OCI-LY7 (cell line): ENCODE measurements at regions of chr3 and their contacts with region 1.

Region 1: GRCh38 chr3:49802719-49803464 is at the start of gene INKA1:
- DNase-seq: peak; percentile 93
- H3K4me3 ChIP-seq: peak within 1 kb of the TSS; percentile 82
- H3K27ac ChIP-seq: peak within 1 kb of the TSS; percentile 96
- H3K4me1 ChIP-seq: peaks cover 46% of the 10 kb centered on the region
- CTCF ChIP-seq: peak; percentile 92
- total RNA-seq, gene INKA1: 12.8 and 18.4 TPM in 2 replicates

Region 2: DNA sequence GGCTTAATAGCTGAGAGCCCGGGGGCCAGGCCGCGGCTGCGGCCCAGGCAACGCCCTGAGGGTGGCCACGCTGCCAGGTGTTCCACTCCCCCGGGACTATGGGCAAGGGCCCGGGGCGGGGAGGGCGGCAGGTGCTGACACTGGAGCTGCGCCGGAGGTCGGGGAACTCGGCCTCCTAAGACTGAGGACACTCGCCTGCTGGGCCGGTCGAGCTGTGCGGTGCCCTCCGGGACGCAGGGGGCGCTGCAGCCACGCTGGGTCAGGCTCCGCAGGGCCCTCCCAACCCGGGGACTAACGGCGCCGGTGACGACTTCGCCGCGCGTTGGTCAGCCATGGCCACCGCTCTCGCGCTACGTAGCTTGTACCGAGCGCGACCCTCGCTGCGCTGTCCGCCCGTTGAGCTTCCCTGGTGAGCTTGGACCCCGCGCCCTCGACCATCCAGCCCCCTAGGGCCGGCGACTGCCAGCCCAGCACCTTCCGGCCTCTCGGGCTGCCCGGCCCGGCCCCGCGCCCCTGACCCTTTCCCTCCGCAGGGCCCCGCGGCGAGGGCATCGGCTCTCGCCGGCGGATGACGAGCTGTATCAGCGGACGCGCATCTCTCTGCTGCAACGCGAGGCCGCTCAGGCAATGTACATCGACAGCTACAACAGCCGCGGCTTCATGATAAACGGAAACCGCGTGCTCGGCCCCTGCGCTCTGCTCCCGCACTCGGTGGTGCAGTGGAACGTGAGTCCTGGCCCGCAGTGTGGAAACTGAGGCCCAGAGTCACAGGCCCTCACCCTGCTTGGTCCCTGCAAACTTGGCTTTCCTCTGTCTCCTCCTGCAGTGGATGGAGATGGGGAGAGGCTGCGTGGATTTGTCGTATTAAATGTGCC is 780.8 kb before region 1 on chr3 and contains the start of gene NDUFAF3:
- CTCF ChIA-PET with region 1: no interaction called
- POLR2A ChIA-PET with region 1: no interaction called
- intact Hi-C with region 1: loop called (anchors 5 kb)
- DNase-seq: peak; percentile 99
- H3K4me3 ChIP-seq: peak within 1 kb of the TSS; percentile 80
- H3K27ac ChIP-seq: peak within 1 kb of the TSS; percentile 93
- H3K4me1 ChIP-seq: peaks cover 65% of the 10 kb centered on the region
- CTCF ChIP-seq: peak; percentile 84
- total RNA-seq, gene NDUFAF3: 255 and 309 TPM in 2 replicates

Region 3: DNA sequence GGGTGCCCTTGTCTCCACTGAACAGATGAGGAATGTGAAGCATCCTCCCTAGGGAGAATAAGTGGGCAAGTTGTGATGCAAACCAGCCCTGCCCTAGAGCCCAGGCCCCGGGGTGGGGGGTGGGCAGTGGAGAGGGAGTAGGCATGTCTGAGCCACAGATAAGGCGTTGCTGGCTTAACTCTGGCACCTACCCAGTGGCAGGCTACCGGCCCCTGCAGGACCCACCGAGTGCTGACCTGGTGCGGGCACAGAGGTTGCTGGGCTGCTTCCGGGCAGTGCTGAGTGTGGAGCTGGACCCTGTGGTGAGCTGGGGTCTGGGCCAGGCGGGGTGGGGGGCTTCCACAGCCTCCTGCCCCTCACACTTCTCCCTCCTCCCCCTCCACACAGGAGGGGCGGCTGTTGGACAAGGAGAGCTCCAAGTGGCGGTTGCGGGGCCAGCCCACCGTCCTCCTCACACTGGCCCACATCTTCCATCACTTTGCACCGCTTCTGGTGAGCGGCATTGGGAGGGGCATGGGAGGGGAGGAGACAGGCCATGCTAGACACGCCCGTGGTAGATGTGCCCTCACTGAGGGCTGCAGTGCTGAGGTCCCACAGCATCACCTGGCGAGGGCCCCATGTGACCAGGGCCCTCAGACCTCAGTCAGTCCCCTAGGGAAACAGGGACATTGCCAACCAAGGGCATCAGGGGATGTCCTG is 103.5 kb before region 1 on chr3:
- CTCF ChIA-PET with region 1: no interaction called
- POLR2A ChIA-PET with region 1: no interaction called
- intact Hi-C with region 1: no loop called
- DNase-seq: no peak
- H3K4me3 ChIP-seq: no peak overlapping the region
- H3K27ac ChIP-seq: no peak overlapping the region
- H3K4me1 ChIP-seq: no peaks in the 10 kb centered on the region
- CTCF ChIP-seq: no peak

Region 4: DNA sequence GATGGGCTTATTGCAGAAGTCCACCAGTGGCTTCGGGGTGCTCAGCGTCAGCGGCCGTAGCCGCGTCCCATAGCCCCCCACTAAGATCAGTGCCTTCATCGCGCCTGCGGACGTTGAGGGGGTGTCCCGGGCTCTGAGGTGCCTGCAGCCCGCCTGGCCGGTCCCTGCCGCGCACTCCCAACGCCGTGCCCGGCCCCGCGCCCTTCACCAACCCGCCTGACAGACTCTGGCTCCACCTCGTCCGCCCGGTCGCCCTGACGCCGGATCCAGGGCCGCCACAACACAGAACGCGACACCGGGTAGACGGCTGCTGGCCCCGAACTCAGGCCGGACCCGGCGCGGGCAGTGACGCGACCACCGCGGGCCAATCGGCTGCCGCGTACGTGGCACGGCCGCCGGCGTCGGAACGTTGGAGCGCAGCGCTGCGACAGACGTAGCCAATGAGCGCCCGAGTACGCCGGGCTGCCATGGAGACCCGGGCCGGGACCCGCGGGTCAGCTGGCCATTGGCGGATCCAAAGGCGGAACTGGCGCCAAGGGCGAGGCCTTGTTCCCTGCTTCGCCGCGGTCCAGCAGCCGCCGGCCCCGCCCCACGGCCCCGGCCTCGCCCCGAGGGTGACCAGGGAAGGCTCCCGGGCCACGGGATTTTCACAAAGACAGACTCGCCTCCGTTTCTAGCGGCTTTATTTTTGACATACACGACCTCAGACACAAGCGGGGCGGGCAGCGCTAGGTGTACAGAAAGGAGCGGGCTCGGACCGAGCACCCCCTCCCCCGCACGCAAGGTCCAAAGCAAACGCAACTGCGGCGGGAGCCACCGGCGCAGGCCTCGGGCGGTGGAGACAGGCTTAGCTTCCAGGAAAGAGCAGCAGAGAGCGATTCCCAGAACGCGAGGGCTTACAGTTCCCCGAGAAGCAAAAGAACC is 79.0 kb before region 1 on chr3 and contains the start of gene GMPPB:
- CTCF ChIA-PET with region 1: no interaction called
- POLR2A ChIA-PET with region 1: no interaction called
- intact Hi-C with region 1: loop called (anchors 1 kb)
- DNase-seq: peak; percentile 98
- H3K4me3 ChIP-seq: peak within 1 kb of the TSS; percentile 93
- H3K27ac ChIP-seq: peak within 1 kb of the TSS; percentile 74
- H3K4me1 ChIP-seq: peaks cover 50% of the 10 kb centered on the region
- CTCF ChIP-seq: no peak
- total RNA-seq, gene GMPPB: 40.7 and 43.6 TPM in 2 replicates

Region 5: DNA sequence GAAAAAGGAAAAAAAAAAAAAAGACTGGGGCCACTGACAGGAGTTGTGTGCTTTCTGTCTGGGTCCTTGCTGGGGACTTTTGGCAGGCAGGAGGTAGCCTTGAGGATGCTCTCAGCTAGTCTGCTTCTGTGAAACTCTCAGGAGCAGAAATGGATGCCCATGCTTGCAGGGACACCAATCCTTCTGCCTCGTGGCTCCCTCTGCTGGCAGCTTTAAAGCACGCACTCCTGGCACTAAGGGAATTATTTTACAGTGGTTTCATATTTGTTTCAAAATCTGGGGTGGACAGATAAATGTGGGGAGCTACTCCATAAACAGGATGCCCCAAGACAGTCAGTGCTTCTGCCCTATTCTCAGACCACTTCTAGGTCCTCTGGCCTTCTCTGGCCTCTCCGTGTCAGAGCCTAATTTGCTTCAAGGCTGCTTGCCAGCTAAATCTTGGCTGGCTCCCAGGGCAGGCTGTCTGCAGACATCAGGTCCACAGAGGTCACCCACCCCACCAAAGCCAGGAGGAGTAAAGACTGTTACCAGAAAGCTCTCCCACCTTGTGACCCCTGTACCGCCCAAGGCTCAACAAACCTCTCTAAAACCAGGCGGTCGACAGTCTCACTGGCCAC is 36.4 kb after region 1 on chr3:
- CTCF ChIA-PET with region 1: interaction called, 29 read pairs
- POLR2A ChIA-PET with region 1: interaction called, 15 read pairs
- intact Hi-C with region 1: loop called (anchors 1 kb)
- DNase-seq: peak; percentile 85
- H3K4me3 ChIP-seq: no peak overlapping the region
- H3K27ac ChIP-seq: no peak overlapping the region
- H3K4me1 ChIP-seq: peaks cover 3% of the 10 kb centered on the region
- CTCF ChIP-seq: peak; percentile 97

Region 6: GRCh38 chr3:49906004-49906743 is 103.3 kb after region 1 on chr3:
- CTCF ChIA-PET with region 1: no interaction called
- POLR2A ChIA-PET with region 1: interaction called, 7 read pairs
- intact Hi-C with region 1: loop called (anchors 1 kb)
- DNase-seq: peak; percentile 57
- H3K4me3 ChIP-seq: no peak overlapping the region
- H3K27ac ChIP-seq: no peak overlapping the region
- H3K4me1 ChIP-seq: peaks cover 13% of the 10 kb centered on the region
- CTCF ChIP-seq: peak; percentile 84

Region 7: DNA sequence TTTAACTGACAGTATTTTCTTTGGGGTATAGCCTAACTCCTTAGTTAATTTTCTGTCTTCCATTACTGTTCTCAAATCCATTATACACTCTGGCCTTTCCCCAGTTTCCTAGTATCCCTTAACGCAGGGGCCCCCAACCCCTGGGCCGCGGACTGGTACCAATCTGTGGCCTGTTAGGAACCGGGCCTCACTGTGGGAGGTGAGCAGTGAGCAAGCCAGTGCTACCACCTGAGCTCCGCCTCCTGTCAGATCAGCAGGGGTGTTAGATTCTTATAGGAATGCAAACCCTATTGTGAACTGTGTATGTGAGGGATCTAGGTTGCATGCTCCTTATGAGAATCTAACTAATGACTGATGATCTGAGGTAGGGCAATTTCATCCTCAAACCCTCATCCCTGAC is 946.9 kb after region 1 on chr3:
- CTCF ChIA-PET with region 1: no interaction called
- POLR2A ChIA-PET with region 1: no interaction called
- intact Hi-C with region 1: no loop called
- DNase-seq: no peak
- H3K4me3 ChIP-seq: no peak overlapping the region
- H3K27ac ChIP-seq: no peak overlapping the region
- H3K4me1 ChIP-seq: no peaks in the 10 kb centered on the region
- CTCF ChIP-seq: no peak